ENCODE measurements at regions of chr3 and their contacts with region 1.

Region 1: GRCh38 chr3:122101646-122102045 is 46.5 kb downstream of the CD86 start:
- DNase-seq: no peak
- ATAC-seq: peak; percentile 63
- H3K4me3 Mint-ChIP-seq: no peak overlapping the region
- H3K27ac Mint-ChIP-seq: peak overlapping the region; percentile 51
- H3K4me1 Mint-ChIP-seq: peaks cover 46% of the 10 kb centered on the region
- H3K27me3 Mint-ChIP-seq: no peaks in the 10 kb centered on the region
- CTCF ChIP-seq: no peak

Region 2: DNA sequence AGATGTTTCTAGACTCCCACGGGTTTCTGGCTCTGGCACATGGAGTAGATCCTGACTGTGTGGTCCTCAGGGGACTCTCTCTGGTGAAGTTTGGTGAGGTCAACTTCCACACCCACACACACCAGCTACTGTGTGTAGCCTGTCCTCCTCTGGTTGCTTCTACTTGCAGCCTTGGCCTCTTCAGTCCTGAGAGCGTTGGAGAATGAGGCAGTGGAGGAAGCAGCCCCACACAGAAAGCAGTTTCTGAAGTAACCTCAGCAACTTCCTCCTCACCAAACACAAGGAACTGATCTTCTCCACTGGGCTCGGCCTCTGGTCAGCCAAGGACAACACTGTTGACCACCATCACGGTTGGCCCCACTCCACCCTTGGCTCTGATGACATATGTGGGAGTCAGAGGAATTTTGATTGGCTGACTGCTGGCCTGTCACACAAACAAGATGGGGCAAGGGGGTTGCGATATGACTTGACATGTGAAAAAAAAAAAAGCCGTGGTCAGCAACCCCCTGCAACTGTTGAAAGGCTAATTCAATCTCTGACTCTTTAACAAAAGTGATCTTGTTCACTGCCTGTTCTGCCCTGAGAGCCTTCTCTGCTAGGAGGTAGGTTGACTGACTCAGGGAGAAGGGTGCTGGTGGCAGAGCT is 26.9 kb before region 1 on chr3:
- CTCF ChIA-PET with region 1: interaction called, 3 read pairs
- POLR2A ChIA-PET with region 1: interaction called, 14 read pairs
- intact Hi-C with region 1: loop called (anchors 1 kb)
- DNase-seq: peak; percentile 32
- ATAC-seq: peak; percentile 18
- H3K4me3 Mint-ChIP-seq: peak overlapping the region; percentile 62
- H3K27ac Mint-ChIP-seq: peak overlapping the region; percentile 89
- H3K4me1 Mint-ChIP-seq: peaks cover 74% of the 10 kb centered on the region
- H3K27me3 Mint-ChIP-seq: no peaks in the 10 kb centered on the region
- CTCF ChIP-seq: no peak

Region 3: GRCh38 chr3:122132949-122133540 is 31.4 kb after region 1 on chr3:
- CTCF ChIA-PET with region 1: no interaction called
- POLR2A ChIA-PET with region 1: no interaction called
- intact Hi-C with region 1: no loop called
- DNase-seq: no peak
- ATAC-seq: no peak
- H3K4me3 Mint-ChIP-seq: no peak overlapping the region
- H3K27ac Mint-ChIP-seq: no peak overlapping the region
- H3K4me1 Mint-ChIP-seq: no peaks in the 10 kb centered on the region
- H3K27me3 Mint-ChIP-seq: no peaks in the 10 kb centered on the region
- CTCF ChIP-seq: no peak

Region 4: GRCh38 chr3:122258757-122259371 is 157.2 kb after region 1 on chr3:
- CTCF ChIA-PET with region 1: interaction called, 60 read pairs
- POLR2A ChIA-PET with region 1: interaction called, 18 read pairs
- intact Hi-C with region 1: loop called (anchors 1 kb)
- DNase-seq: peak; percentile 55
- ATAC-seq: peak; percentile 96
- H3K4me3 Mint-ChIP-seq: no peak overlapping the region
- H3K27ac Mint-ChIP-seq: no peak overlapping the region
- H3K4me1 Mint-ChIP-seq: peaks cover 16% of the 10 kb centered on the region
- H3K27me3 Mint-ChIP-seq: no peaks in the 10 kb centered on the region
- CTCF ChIP-seq: peak; percentile 31

Region 5: GRCh38 chr3:122356415-122356814 is 254.8 kb after region 1 on chr3:
- CTCF ChIA-PET with region 1: interaction called, 3 read pairs
- POLR2A ChIA-PET with region 1: no interaction called
- intact Hi-C with region 1: loop called (anchors 1 kb)
- DNase-seq: no peak
- ATAC-seq: no peak
- H3K4me3 Mint-ChIP-seq: no peak overlapping the region
- H3K27ac Mint-ChIP-seq: no peak overlapping the region
- H3K4me1 Mint-ChIP-seq: no peaks in the 10 kb centered on the region
- H3K27me3 Mint-ChIP-seq: no peaks in the 10 kb centered on the region
- CTCF ChIP-seq: no peak

Region 6: GRCh38 chr3:122760453-122761271 is 659.0 kb after region 1 on chr3:
- CTCF ChIA-PET with region 1: no interaction called
- POLR2A ChIA-PET with region 1: interaction called, 13 read pairs
- intact Hi-C with region 1: no loop called
- DNase-seq: no peak
- ATAC-seq: no peak
- H3K4me3 Mint-ChIP-seq: no peak overlapping the region
- H3K27ac Mint-ChIP-seq: no peak overlapping the region
- H3K4me1 Mint-ChIP-seq: peaks cover 9% of the 10 kb centered on the region
- H3K27me3 Mint-ChIP-seq: no peaks in the 10 kb centered on the region
- CTCF ChIP-seq: no peak

Measured in activated B cell treated with CpG ODN at 0.5 μM for 24 hours (primary cell).